ENCODE measurements at regions of chr3 and their contacts with region 1.

Region 1: DNA sequence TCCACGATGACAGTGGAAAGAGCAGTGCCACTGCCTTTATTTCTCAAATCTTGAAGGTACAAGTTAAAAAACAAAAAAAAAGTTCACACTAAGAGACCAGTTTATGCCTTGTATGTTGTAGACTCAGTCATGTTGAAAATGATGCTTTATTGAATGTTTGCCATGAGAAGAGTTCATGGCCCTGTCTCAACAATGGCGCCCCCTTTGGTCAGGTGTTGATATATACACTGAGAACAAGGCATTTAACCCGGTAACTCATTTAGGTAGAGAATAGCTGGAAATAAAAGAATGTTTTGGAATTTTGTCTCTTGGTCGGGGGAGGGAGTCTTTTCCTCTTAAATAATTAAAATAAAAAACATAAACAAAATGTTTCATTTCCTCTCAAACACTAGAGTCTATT is 145.6 kb upstream of the SLC2A2 start:
- DNase-seq: no peak
- H3K4me3 ChIP-seq: no peak overlapping the region
- H3K27ac ChIP-seq: no peak overlapping the region
- H3K4me1 ChIP-seq: peaks cover 0 to 15% (median 0%) of the 10 kb centered on the region in 3 donors
- H3K27me3 ChIP-seq: no peaks in the 10 kb centered on the region
- CTCF ChIP-seq: peak in 1 of 6 experiments; percentile 14
- POLR2A ChIP-seq: no peak

Region 2: GRCh38 chr3:170961616-170962400 is 210.3 kb before region 1 on chr3:
- intact Hi-C with region 1: no loop called
- DNase-seq: no peak
- H3K4me3 ChIP-seq: no peak overlapping the region
- H3K27ac ChIP-seq: no peak overlapping the region
- H3K4me1 ChIP-seq: no peaks in the 10 kb centered on the region
- H3K27me3 ChIP-seq: no peaks in the 10 kb centered on the region
- CTCF ChIP-seq: peak; percentile 40 to 67 (median 50)
- POLR2A ChIP-seq: no peak

Region 3: GRCh38 chr3:171320750-171321558 is 148.9 kb after region 1 on chr3:
- intact Hi-C with region 1: no loop called
- DNase-seq: no peak
- H3K4me3 ChIP-seq: no peak overlapping the region
- H3K27ac ChIP-seq: peak overlapping the region in 2 of 4 donors; percentile 42 to 52
- H3K4me1 ChIP-seq: peaks cover 0 to 5% (median 0%) of the 10 kb centered on the region in 3 donors
- H3K27me3 ChIP-seq: no peaks in the 10 kb centered on the region
- CTCF ChIP-seq: no peak
- POLR2A ChIP-seq: no peak

Region 4: GRCh38 chr3:171556148-171557145 is 384.4 kb after region 1 on chr3:
- intact Hi-C with region 1: loop called (anchors 10 kb)
- DNase-seq: no peak
- H3K4me3 ChIP-seq: no peak overlapping the region
- H3K27ac ChIP-seq: no peak overlapping the region
- H3K4me1 ChIP-seq: no peaks in the 10 kb centered on the region
- H3K27me3 ChIP-seq: no peaks in the 10 kb centered on the region
- CTCF ChIP-seq: no peak
- POLR2A ChIP-seq: no peak

Region 5: GRCh38 chr3:171703756-171704401 is 531.8 kb after region 1 on chr3:
- intact Hi-C with region 1: no loop called
- DNase-seq: no peak
- H3K4me3 ChIP-seq: no peak overlapping the region
- H3K27ac ChIP-seq: no peak overlapping the region
- H3K4me1 ChIP-seq: no peaks in the 10 kb centered on the region
- H3K27me3 ChIP-seq: no peaks in the 10 kb centered on the region
- CTCF ChIP-seq: peak in 5 of 6 experiments; percentile 47 to 70 (median 49)
- POLR2A ChIP-seq: no peak

Measured in esophagus squamous epithelium (tissue), 5 donors.